ENCODE measurements at regions of chr21 and their contacts with region 1.

Region 1: DNA sequence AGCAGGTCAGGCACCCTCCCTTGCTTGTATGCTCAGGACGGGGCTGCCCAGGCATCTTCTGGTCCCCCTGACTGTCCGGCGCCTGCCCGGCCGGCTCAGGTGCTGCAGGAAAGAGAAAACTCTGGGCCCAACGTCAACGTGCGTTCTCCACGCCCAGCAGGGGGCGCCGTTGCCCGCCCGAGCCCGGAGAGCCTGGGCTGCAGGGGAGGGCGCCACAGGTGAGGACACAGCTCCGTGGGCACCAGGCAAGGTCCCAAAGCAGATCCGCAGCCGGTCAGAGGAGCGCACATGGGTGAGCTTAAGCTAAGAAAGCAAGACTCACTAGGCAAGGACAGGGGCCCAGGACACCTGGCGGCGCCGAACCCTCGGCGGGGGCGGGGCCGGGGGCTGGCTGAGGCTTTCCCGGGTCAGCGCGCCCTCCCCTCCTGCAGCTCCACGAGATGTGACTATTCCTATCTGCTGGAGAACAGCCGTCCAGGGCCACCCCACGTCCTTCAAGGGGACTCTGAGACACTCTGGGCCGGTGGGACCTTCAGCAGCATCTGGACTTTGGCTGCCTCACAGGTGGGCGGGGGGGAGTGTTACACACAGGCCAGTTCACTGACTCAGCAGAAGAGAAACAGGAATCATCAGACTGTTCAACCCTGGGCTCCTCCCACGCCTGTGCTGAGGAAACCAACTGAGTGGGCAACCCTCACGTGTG is 29.3 kb downstream of the KRTAP10-1 start:
- DNase-seq: peak; percentile 72
- H3K4me3 Mint-ChIP-seq: no peak overlapping the region
- H3K27ac Mint-ChIP-seq: no peak overlapping the region
- H3K4me1 Mint-ChIP-seq: no peaks in the 10 kb centered on the region
- H3K27me3 Mint-ChIP-seq: peaks cover 6% of the 10 kb centered on the region

Region 2: DNA sequence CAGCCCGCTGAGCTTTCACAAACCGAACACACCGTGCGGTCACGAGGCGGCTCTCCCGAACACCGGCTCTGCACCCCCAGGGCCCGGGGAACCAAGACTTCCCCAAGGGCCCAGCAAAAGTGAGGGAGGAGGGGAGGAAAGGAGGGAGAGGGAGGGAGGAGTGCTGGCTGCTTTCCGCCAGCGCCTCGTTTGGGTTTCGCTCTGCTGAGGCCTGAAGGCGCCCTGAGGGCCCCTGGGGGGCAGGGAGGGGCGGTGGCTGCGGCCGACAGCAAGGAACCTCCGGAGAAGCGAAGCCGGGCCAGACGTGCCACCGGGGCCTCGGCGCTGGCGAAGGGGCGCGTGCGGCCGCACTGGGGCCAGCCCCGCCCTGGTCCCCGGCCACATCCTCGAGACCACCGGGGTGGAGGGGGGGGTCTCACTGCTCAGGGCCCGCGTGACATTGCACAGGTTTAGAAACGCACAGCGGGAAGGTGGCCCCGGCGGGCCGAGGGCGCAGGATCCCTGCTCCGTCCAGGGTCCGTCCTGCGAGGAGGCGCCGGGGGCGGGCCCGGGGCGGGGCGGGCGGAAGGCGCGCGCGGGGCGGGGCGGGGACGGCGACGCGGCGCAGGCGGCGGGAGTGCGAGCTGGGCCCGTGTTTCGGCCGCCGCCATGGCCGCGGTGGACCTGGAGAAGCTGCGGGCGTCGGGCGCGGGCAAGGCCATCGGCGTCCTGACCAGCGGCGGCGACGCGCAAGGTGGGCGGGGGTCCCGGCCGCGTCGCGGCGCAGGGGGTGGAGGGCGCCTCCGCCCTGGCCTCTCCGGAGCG is 211.0 kb before region 1 on chr21 and contains the start of gene PFKL:
- intact Hi-C with region 1: no loop called
- DNase-seq: peak; percentile 60
- H3K4me3 Mint-ChIP-seq: peak within 1 kb of the TSS; percentile 86
- H3K27ac Mint-ChIP-seq: peak within 1 kb of the TSS; percentile 91
- H3K4me1 Mint-ChIP-seq: peaks cover 39% of the 10 kb centered on the region
- H3K27me3 Mint-ChIP-seq: no peaks in the 10 kb centered on the region
- total RNA-seq, gene PFKL: 132 and 139 TPM in 2 replicates

Region 3: GRCh38 chr21:44454747-44455523 is 55.7 kb before region 1 on chr21 and contains the start of gene LRRC3:
- intact Hi-C with region 1: no loop called
- DNase-seq: peak; percentile 67
- H3K4me3 Mint-ChIP-seq: peak within 1 kb of the TSS; percentile 81
- H3K27ac Mint-ChIP-seq: peak within 1 kb of the TSS; percentile 16
- H3K4me1 Mint-ChIP-seq: peaks cover 4% of the 10 kb centered on the region
- H3K27me3 Mint-ChIP-seq: peaks cover 28% of the 10 kb centered on the region
- total RNA-seq, gene LRRC3: 1.8 and 1.9 TPM in 2 replicates

Region 4: GRCh38 chr21:44742418-44743153 is 231.9 kb after region 1 on chr21:
- intact Hi-C with region 1: loop called (anchors 1 kb)
- DNase-seq: no peak
- H3K4me3 Mint-ChIP-seq: no peak overlapping the region
- H3K27ac Mint-ChIP-seq: no peak overlapping the region
- H3K4me1 Mint-ChIP-seq: no peaks in the 10 kb centered on the region
- H3K27me3 Mint-ChIP-seq: peaks cover 12% of the 10 kb centered on the region

Region 5: DNA sequence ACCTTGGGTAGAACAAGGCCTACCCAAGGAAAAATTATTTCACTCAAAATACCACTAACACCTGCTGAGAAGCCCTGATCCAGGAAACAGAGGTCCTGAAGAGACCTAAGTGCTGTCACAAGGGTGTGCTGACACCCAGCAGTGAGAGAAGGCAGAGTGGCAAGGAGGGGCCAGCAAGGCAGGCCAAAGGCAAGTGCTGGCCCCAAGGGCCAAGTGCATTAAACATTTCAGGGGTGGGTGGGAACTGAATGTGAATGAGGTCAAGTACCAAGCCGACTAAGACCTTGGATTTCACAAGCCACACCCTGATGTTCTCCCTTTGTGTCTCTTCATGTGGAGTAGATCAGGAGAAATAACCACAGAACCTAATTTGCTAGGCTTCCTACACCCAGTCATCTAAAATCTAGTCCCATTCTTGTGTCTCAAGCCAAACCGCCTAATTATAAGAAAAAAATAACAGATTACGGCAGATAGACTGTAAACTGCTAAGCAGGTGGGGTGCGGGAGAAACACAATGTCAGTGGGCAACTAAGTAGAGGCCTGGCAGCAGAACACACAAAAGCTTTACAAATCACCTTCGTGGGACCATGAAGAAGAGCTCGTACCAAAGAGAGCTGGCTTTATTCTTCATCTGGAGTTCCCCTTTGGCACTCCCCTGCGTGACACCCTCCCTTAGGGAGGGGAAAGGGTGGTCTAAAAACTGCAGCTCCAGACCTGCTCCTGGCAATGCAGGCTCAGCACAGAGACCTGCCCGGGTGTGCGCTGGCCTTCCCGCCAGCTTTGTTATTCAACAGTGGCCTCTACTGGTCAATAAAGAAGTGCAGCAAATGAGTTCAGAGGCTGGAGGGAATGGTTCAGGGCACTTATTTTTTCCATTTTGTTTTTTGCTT is 282.3 kb after region 1 on chr21:
- intact Hi-C with region 1: loop called (anchors 1 kb)
- DNase-seq: peak; percentile 45
- H3K4me3 Mint-ChIP-seq: no peak overlapping the region
- H3K27ac Mint-ChIP-seq: peak overlapping the region; percentile 10
- H3K4me1 Mint-ChIP-seq: peaks cover 41% of the 10 kb centered on the region
- H3K27me3 Mint-ChIP-seq: no peaks in the 10 kb centered on the region

Region 6: GRCh38 chr21:44801468-44802395 is 291.1 kb after region 1 on chr21 and contains the start of gene UBE2G2:
- intact Hi-C with region 1: loop called (anchors 2 kb)
- DNase-seq: peak; percentile 87
- H3K4me3 Mint-ChIP-seq: peak within 1 kb of the TSS; percentile 99
- H3K27ac Mint-ChIP-seq: peak within 1 kb of the TSS; percentile 94
- H3K4me1 Mint-ChIP-seq: peaks cover 54% of the 10 kb centered on the region
- H3K27me3 Mint-ChIP-seq: no peaks in the 10 kb centered on the region
- total RNA-seq, gene UBE2G2: 137 and 151 TPM in 2 replicates

Measured in activated T-helper 1 cell treated with anti-CD3 and anti-CD28 coated beads, Interleukin-12 subunit alpha, Interleukin-12 subunit beta, Interleukin-2, Interleukin-4 antibody, amounts not matched to agents 30 ng/mL and 10 ng/mL and 1 ng/mL, durations not matched to agents 14 hours and 24 hours and 36 hours (primary cell).